ENCODE measurements at regions of chr9 and their contacts with region 1.

Region 1: DNA sequence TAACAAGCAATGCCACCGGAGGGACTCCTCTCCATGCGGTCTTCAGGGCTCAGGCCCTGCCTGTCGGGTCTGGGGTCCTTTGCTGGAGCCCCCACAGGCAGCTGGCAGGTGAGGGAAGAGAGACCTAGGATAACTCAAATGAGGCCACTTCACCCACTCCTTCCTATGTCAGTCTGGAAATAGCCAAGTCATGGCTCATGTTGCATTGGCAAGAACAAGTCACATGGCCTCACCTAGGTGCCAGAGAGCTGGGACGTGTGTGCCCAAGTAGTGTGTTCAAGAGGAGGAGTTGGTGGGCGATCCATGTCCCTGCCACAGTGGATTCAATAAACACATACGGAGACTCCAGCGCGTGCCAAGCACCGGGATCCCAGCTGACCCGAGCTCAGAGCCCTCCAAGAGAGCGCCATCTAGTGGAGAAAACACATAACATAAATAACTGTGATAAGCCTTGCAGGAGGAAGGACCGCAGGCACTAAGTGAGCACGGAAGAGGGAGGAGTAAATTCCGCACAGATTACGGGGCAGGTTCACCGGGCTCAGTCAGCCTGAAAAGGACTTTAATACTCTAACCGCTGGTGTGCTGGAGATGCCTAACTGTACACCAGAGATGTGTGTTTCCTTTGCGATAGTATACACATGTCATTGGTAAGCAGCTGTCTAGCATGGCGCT is 580.8 kb downstream of the CCDC171 start:
- DNase-seq: peak; percentile 61 to 80 (median 80)
- H3K4me3 ChIP-seq: peak overlapping the region in 2 of 7 experiments; percentile 9 to 60
- H3K27ac ChIP-seq: no peak overlapping the region
- H3K4me1 ChIP-seq: peaks cover 0 to 4% (median 3%) of the 10 kb centered on the region in 4 experiments
- H3K27me3 ChIP-seq: no peaks in the 10 kb centered on the region

Region 2: DNA sequence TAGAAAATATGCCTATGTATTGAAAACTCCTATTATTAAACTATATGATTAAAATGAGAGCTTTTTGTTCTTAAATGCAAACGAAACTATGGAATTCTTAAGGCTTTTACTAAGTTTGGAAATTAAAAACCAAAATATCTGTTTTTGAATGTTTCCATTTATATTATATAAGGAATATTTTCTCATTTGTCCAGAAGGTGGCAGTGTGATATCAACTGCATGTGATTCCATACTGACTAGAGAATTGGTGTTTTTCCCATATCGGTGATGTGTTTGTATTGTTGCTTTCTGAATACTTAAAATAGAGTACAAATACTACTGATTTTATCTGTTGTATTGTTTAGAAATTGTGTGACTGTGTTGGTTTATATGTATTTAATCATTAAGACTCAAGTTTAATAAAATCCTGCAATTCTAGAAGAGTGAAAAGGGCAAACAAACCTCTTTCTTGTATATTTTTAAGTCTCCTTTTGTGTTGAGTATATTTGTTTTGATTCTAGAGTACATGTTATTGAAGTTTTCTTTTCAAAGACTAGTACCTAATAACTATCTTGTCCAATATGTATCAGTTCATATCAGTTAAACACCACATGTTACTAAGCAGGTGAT is 260.0 kb before region 1 on chr9:
- CTCF ChIA-PET with region 1: interaction called, 22 read pairs
- POLR2A ChIA-PET with region 1: no interaction called
- DNase-seq: peak; percentile 29 to 68 (median 57)
- H3K4me3 ChIP-seq: no peak overlapping the region
- H3K27ac ChIP-seq: no peak overlapping the region
- H3K4me1 ChIP-seq: no peaks in the 10 kb centered on the region
- H3K27me3 ChIP-seq: no peaks in the 10 kb centered on the region

Region 3: GRCh38 chr9:16074963-16075362 is 58.7 kb before region 1 on chr9:
- CTCF ChIA-PET with region 1: no interaction called
- POLR2A ChIA-PET with region 1: no interaction called
- DNase-seq: peak; percentile 3 to 40 (median 37)
- H3K4me3 ChIP-seq: no peak overlapping the region
- H3K27ac ChIP-seq: no peak overlapping the region
- H3K4me1 ChIP-seq: peaks cover 0 to 12% (median 0%) of the 10 kb centered on the region in 4 experiments
- H3K27me3 ChIP-seq: no peaks in the 10 kb centered on the region

Region 4: DNA sequence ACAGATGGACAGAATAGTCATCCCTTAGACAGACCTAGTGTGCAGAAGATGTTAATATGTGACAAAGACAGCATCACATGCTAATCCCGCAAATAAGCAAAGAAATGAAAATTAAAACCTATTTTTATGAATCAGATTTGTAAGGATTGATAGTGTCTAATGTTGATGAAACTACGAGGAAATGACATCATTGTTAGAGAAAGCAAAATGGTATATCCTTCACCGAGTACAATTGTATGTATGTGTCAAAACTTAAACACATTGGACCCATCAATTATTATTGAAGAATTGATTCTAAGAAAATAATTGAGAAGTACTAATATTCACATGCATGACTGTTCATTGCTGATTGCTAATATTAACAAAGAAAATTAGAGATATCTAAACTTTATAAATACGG is 243.6 kb after region 1 on chr9:
- CTCF ChIA-PET with region 1: no interaction called
- POLR2A ChIA-PET with region 1: no interaction called
- DNase-seq: no peak
- H3K4me3 ChIP-seq: no peak overlapping the region
- H3K27ac ChIP-seq: no peak overlapping the region
- H3K4me1 ChIP-seq: no peaks in the 10 kb centered on the region
- H3K27me3 ChIP-seq: no peaks in the 10 kb centered on the region